HepG2 (cell line): ENCODE measurements at regions of chr2 and their contacts with region 1.

Region 1: DNA sequence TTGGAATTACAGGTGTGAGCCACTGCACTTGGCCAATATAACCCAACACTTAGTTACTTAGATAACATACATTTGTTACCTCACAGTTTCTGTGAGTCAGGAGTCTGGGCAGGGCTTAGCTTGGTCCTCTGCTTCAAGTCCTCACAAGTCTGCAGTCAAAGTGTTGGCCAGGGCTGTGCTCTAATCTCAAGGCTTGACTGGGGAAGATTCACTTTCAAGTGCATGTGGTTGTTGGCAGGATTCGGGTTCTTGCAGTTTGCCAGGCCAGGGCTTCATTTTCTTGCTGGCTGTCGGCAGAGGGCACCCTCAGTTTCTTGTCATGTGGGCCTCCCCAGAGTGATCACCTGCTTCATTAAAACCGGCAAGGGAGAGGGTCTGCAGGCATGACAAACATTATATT is 103.7 kb downstream of the SLC4A3 start:
- DNase-seq: peak; percentile 24
- ATAC-seq: peak; percentile 70
- H3K4me3 ChIP-seq: no peak overlapping the region
- H3K27ac ChIP-seq: no peak overlapping the region
- H3K4me1 ChIP-seq: no peaks in the 10 kb centered on the region
- H3K27me3 ChIP-seq: peaks cover 0 to 27% of the 10 kb centered on the region in 2 experiments; a peak in 4 of 5 replicates
- CTCF ChIP-seq: peak; percentile 59
- EP300 ChIP-seq: no peak
- POLR2A ChIP-seq: no peak
- RAD21 ChIP-seq: no peak

Region 2: DNA sequence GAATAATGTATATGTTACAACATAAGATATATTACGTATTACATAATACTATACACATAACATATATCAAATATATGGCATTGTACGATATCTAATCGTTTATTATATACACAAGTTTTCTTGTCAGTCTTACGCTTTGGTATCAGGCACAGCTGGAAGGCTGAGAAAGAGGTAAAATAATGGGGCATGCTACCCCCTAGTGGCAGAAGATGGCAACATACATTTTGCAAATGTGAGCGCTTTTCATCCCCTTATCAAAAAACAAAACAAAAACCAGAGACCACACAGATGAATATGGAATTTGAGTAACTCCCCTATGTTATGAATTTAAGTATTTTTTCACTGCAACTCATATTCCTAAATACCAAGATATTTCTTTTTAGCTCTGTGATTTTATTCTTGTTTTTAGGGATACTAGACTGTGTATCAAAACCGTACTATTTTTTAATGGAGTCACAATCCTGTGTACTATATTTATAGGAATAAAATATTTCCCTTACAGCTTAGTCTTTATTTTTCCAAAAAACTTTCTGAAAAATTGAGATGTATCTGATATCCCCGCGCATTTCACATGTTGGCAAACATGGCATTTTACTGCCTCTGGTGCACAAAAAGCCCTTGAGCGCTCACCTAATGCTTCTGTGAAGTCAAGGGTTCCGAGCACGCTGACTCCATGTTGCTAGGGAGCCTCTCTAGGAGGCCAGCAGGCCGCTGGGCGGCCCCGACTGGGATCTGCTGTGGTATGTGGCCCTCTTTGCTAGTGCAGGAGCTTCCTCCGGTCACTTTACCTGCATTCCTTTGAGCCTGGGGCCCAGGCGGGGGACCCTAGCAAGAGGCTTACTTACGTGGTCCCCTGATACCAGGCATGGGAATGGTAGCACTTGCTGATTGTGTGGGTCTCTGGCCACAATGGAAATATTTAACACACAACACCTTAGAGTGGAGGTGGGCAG is 41.2 kb before region 1 on chr2:
- CTCF ChIA-PET with region 1: no interaction called
- POLR2A ChIA-PET with region 1: no interaction called
- in situ Hi-C with region 1: no loop called
- intact Hi-C with region 1: no loop called
- DNase-seq: peak; percentile 51
- ATAC-seq: 0 out of 3 replicates have a peak, but pooled peaks have one; percentile 14
- H3K4me3 ChIP-seq: no peak overlapping the region
- H3K27ac ChIP-seq: no peak overlapping the region
- H3K4me1 ChIP-seq: peaks cover 34% of the 10 kb centered on the region
- H3K27me3 ChIP-seq: peaks cover 0 to 41% of the 10 kb centered on the region in 2 experiments; a peak in 3 of 5 replicates
- CTCF ChIP-seq: peak; percentile 81
- EP300 ChIP-seq: no peak
- POLR2A ChIP-seq: no peak
- RAD21 ChIP-seq: 0 out of 2 replicates have a peak, but pooled peaks have one; percentile 29

Region 3: DNA sequence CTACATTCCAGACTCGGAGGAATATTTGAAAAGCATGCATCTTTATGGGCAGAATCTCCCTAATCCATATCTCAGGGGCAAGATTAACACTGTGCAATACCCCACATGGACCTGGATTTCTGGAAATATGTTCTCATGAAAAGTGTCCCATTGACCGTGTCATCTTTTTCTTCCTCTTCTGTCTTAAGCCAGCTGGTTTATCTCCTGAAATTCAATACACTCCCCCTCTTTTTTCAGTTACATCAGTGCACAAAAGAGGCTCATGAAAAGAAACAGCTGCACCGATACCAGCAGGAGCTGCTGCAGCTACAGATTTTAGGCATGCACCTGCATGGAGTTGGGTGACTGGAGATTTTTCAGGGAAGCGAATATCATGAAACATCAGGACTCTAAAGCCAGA is 13.4 kb after region 1 on chr2:
- CTCF ChIA-PET with region 1: no interaction called
- POLR2A ChIA-PET with region 1: no interaction called
- in situ Hi-C with region 1: no loop called
- intact Hi-C with region 1: no loop called
- DNase-seq: no peak
- ATAC-seq: no peak
- H3K4me3 ChIP-seq: no peak overlapping the region
- H3K27ac ChIP-seq: no peak overlapping the region
- H3K4me1 ChIP-seq: no peaks in the 10 kb centered on the region
- H3K27me3 ChIP-seq: peaks cover 0 to 38% of the 10 kb centered on the region in 2 experiments; a peak in 2 of 5 replicates
- CTCF ChIP-seq: no peak
- EP300 ChIP-seq: no peak
- POLR2A ChIP-seq: no peak
- RAD21 ChIP-seq: no peak

Region 4: GRCh38 chr2:219836647-219837177 is 105.5 kb after region 1 on chr2:
- CTCF ChIA-PET with region 1: interaction called, 9 read pairs
- POLR2A ChIA-PET with region 1: no interaction called
- in situ Hi-C with region 1: loop called (anchors 5 kb)
- intact Hi-C with region 1: loop called (anchors 1 kb)
- DNase-seq: peak; percentile 60
- ATAC-seq: peak; percentile 80
- H3K4me3 ChIP-seq: no peak overlapping the region
- H3K27ac ChIP-seq: no peak overlapping the region
- H3K4me1 ChIP-seq: no peaks in the 10 kb centered on the region
- H3K27me3 ChIP-seq: peaks cover 0 to 1% of the 10 kb centered on the region in 2 experiments; a peak in 2 of 5 replicates
- CTCF ChIP-seq: peak; percentile 60
- EP300 ChIP-seq: no peak
- POLR2A ChIP-seq: no peak
- RAD21 ChIP-seq: no peak